CD4-positive, alpha-beta T cell (primary cell): ENCODE measurements at regions of chr1 and their contacts with region 1.

Region 1: DNA sequence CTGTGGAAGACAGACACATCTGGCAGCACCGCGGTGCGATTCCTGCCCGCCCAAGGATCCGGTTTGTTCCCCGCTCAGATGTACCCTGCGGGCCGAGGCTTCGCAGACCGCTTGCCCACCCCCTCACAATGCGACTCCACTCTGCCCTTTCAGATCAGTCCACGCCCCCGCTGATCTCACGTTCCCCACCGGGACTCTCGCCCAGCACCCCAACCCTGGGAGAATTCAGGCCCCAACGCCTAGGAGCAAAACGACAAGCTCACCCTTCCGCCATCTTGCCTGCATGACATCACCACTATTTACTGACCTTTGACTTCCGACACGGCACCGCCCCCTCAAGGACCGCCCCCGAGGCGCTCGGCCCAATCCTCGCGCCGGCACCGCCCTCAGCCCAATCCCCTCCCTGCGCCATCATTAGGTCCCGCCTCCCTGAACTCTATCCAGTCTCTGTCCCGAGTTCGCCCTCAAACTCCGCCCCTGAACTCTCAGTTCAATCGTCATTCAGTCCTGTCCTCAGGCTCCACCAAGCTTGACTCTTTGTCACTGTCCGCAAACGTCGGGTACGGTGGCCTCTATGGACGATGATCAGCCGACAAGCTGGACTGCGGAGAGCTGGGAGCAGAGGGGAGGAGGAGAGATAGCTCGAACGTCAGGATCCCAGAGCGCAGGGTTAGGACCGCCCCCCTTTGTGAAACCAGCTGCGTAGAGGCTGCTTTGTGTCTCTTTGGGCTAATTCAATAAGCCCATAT is at the start of gene BSDC1:
- DNase-seq: peak; percentile 95 to 99 (median 98)
- ATAC-seq: peak; percentile 97
- H3K4me3 ChIP-seq: peak within 1 kb of the TSS; percentile 85
- H3K4me3 Mint-ChIP-seq: peak within 1 kb of the TSS; percentile 98
- H3K27ac ChIP-seq: peak within 1 kb of the TSS; percentile 92 to 96
- H3K27ac Mint-ChIP-seq: no peak within 1 kb of the TSS
- H3K4me1 ChIP-seq: peaks cover 40% of the 10 kb centered on the region
- H3K4me1 Mint-ChIP-seq: peaks cover 24% of the 10 kb centered on the region
- H3K27me3 ChIP-seq: no peaks in the 10 kb centered on the region
- H3K27me3 Mint-ChIP-seq: no peaks in the 10 kb centered on the region
- CTCF ChIP-seq: no peak
- total RNA-seq, gene BSDC1: 186 to 190 TPM

Region 2: GRCh38 chr1:32072622-32073298 is 321.6 kb before region 1 on chr1 and contains the start of gene TMEM39B:
- CTCF ChIA-PET with region 1: no interaction called
- POLR2A ChIA-PET with region 1: interaction called, 20 read pairs
- intact Hi-C with region 1: loop called in 1 of 2 experiments (anchors 2 kb)
- DNase-seq: peak; percentile 86 to 98 (median 92)
- ATAC-seq: peak; percentile 84
- H3K4me3 ChIP-seq: peak within 1 kb of the TSS; percentile 71
- H3K4me3 Mint-ChIP-seq: peak within 1 kb of the TSS; percentile 89
- H3K27ac ChIP-seq: peak within 1 kb of the TSS; percentile 50 to 68
- H3K27ac Mint-ChIP-seq: peak within 1 kb of the TSS; percentile 82
- H3K4me1 ChIP-seq: peaks cover 27% of the 10 kb centered on the region
- H3K4me1 Mint-ChIP-seq: peaks cover 39% of the 10 kb centered on the region
- H3K27me3 ChIP-seq: no peaks in the 10 kb centered on the region
- H3K27me3 Mint-ChIP-seq: no peaks in the 10 kb centered on the region
- CTCF ChIP-seq: no peak
- total RNA-seq, gene TMEM39B: 7.2 to 7.9 TPM

Region 3: DNA sequence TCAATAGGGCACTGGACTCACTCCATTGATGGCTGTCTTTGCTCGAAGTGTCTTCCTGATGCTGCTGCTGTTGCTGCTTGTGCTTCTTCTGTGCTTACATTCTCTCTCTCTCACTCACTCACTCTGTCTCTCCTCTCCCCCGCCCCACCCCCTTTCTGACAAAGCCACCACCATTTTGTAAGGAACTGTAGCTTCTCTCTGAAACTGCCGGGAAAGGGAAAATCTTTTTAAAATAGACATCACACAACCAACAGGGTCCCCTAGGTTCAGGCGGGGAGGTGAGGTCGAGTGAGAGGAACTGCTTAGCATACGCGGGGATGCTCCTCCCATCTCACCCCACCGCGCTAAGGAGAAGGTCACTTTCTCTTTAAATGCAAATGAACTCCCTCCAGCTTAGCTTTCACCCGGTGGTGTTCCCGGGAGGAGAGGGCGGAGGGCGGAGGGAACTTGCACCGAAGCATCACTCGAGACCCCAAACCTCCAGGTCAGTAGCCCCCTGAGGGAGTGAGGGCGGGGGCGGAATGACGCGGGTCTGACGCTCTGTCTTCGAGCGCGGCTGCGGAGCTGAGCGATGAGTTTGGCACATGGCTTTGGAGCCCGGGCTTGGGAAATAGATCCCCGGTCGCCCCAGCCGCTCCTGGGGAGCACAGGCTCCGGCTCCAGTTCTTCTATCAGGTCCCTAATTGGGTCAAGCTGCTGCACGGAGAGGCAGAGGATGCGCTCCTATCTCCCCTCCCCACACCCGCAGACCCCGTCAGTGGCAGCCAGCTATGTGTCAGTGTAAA is 193.9 kb before region 1 on chr1 and contains the start of gene CCDC28B:
- CTCF ChIA-PET with region 1: interaction called, 3 read pairs
- POLR2A ChIA-PET with region 1: interaction called, 22 read pairs
- intact Hi-C with region 1: no loop called
- DNase-seq: peak in 13 of 14 experiments; percentile 15 to 74 (median 46)
- ATAC-seq: peak; percentile 54
- H3K4me3 ChIP-seq: peak within 1 kb of the TSS; percentile 87
- H3K4me3 Mint-ChIP-seq: peak within 1 kb of the TSS; percentile 82
- H3K27ac ChIP-seq: peak within 1 kb of the TSS; percentile 81 to 97
- H3K27ac Mint-ChIP-seq: peak within 1 kb of the TSS; percentile 95
- H3K4me1 ChIP-seq: peaks cover 75% of the 10 kb centered on the region
- H3K4me1 Mint-ChIP-seq: peaks cover 64% of the 10 kb centered on the region
- H3K27me3 ChIP-seq: no peaks in the 10 kb centered on the region
- H3K27me3 Mint-ChIP-seq: no peaks in the 10 kb centered on the region
- CTCF ChIP-seq: no peak
- total RNA-seq, gene CCDC28B: 4.0 to 5.7 TPM

Region 4: GRCh38 chr1:32240140-32240951 is 154.0 kb before region 1 on chr1:
- CTCF ChIA-PET with region 1: no interaction called
- POLR2A ChIA-PET with region 1: interaction called, 10 read pairs
- intact Hi-C with region 1: no loop called
- DNase-seq: peak in 13 of 14 experiments; percentile 38 to 86 (median 63)
- ATAC-seq: peak; percentile 75
- H3K4me3 ChIP-seq: peak overlapping the region; percentile 90
- H3K4me3 Mint-ChIP-seq: peak overlapping the region; percentile 94
- H3K27ac ChIP-seq: peak overlapping the region; percentile 15 to 50
- H3K27ac Mint-ChIP-seq: peak overlapping the region; percentile 64
- H3K4me1 ChIP-seq: peaks cover 33% of the 10 kb centered on the region
- H3K4me1 Mint-ChIP-seq: peaks cover 25% of the 10 kb centered on the region
- H3K27me3 ChIP-seq: no peaks in the 10 kb centered on the region
- H3K27me3 Mint-ChIP-seq: no peaks in the 10 kb centered on the region
- CTCF ChIP-seq: peak; percentile 52

Region 5: GRCh38 chr1:32321712-32322291 is 72.5 kb before region 1 on chr1:
- CTCF ChIA-PET with region 1: no interaction called
- POLR2A ChIA-PET with region 1: interaction called, 23 read pairs
- intact Hi-C with region 1: no loop called
- DNase-seq: peak in 10 of 14 experiments; percentile 7 to 70 (median 29)
- ATAC-seq: peak; percentile 87
- H3K4me3 ChIP-seq: peak overlapping the region; percentile 25
- H3K4me3 Mint-ChIP-seq: peak overlapping the region; percentile 62
- H3K27ac ChIP-seq: peak overlapping the region; percentile 12 to 49
- H3K27ac Mint-ChIP-seq: peak overlapping the region; percentile 82
- H3K4me1 ChIP-seq: peaks cover 62% of the 10 kb centered on the region
- H3K4me1 Mint-ChIP-seq: peaks cover 51% of the 10 kb centered on the region
- H3K27me3 ChIP-seq: no peaks in the 10 kb centered on the region
- H3K27me3 Mint-ChIP-seq: no peaks in the 10 kb centered on the region
- CTCF ChIP-seq: no peak

Region 6: DNA sequence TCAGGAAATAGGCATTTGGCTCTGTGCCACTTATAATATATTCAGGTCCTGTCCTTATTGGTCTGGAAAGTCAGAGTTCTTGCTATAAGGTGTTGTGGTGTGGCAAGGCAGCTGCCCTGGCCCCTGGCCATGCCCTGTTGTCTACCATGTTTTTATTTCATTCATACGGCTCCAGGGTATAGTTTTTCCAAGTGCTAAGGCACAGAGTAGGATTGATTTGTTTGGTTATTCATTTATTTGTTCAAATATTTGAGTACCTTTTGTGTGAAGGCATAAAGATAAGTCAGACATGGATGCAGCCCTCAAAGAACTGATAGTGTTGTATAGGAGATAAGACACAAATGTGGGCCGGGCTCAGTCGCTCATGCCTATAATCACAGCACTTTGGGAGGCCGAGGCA is 80.6 kb after region 1 on chr1:
- CTCF ChIA-PET with region 1: no interaction called
- POLR2A ChIA-PET with region 1: no interaction called
- intact Hi-C with region 1: no loop called
- DNase-seq: no peak
- ATAC-seq: no peak
- H3K4me3 ChIP-seq: no peak overlapping the region
- H3K4me3 Mint-ChIP-seq: no peak overlapping the region
- H3K27ac ChIP-seq: no peak overlapping the region
- H3K27ac Mint-ChIP-seq: no peak overlapping the region
- H3K4me1 ChIP-seq: no peaks in the 10 kb centered on the region
- H3K4me1 Mint-ChIP-seq: no peaks in the 10 kb centered on the region
- H3K27me3 ChIP-seq: peaks cover 0 to 13% of the 10 kb centered on the region in 2 experiments
- H3K27me3 Mint-ChIP-seq: peaks cover 34% of the 10 kb centered on the region
- CTCF ChIP-seq: no peak

Region 7: DNA sequence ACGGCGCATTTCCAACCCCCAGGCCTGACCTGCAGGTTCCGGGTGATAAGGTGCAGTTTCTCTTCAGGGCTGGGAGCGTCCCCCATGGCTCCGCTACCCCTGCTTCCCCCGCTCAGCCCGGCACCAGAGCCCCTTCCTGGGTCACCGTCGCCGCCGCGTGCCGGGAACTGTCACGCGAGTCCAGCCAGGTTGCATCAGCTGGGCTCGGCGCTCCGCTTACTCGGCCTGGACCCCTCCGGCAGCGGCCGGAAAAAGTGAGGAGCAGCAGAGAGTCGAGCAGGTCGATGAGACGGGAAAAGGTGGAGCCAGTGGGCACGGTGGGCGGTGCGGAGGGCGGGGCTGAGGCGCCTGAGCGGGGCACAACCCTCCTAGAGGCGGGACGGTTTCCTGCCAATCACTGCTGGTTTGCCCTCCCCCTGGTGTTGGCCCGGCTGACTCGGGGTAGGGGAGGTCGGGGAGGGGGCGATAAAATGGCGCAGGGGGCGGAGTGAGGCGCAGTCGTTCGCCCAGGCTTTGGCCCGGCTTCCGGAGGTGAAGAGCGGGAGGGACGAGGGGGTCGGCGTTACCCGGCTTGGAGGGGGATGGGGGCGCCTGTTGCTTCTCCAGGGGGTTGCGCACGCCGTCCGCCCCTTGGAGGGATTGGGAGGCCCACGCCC is 423.0 kb after region 1 on chr1 and contains the starts of genes S100PBP and YARS1:
- CTCF ChIA-PET with region 1: no interaction called
- POLR2A ChIA-PET with region 1: interaction called, 6 read pairs
- intact Hi-C with region 1: loop called in 1 of 2 experiments (anchors 5 kb)
- DNase-seq: peak; percentile 98 to 100 (median 100)
- ATAC-seq: peak; percentile 94
- H3K4me3 ChIP-seq: peak within 1 kb of the TSS; percentile 99
- H3K4me3 Mint-ChIP-seq: peak within 1 kb of the TSS; percentile 100
- H3K27ac ChIP-seq: peak within 1 kb of the TSS; percentile 85 to 87
- H3K27ac Mint-ChIP-seq: peak within 1 kb of the TSS; percentile 96
- H3K4me1 ChIP-seq: peaks cover 60% of the 10 kb centered on the region
- H3K4me1 Mint-ChIP-seq: peaks cover 63% of the 10 kb centered on the region
- H3K27me3 ChIP-seq: no peaks in the 10 kb centered on the region
- H3K27me3 Mint-ChIP-seq: no peaks in the 10 kb centered on the region
- CTCF ChIP-seq: no peak
- total RNA-seq, gene S100PBP: 18.8 to 21.6 TPM
- total RNA-seq, gene YARS1: 67.6 to 73.2 TPM

Region 8: DNA sequence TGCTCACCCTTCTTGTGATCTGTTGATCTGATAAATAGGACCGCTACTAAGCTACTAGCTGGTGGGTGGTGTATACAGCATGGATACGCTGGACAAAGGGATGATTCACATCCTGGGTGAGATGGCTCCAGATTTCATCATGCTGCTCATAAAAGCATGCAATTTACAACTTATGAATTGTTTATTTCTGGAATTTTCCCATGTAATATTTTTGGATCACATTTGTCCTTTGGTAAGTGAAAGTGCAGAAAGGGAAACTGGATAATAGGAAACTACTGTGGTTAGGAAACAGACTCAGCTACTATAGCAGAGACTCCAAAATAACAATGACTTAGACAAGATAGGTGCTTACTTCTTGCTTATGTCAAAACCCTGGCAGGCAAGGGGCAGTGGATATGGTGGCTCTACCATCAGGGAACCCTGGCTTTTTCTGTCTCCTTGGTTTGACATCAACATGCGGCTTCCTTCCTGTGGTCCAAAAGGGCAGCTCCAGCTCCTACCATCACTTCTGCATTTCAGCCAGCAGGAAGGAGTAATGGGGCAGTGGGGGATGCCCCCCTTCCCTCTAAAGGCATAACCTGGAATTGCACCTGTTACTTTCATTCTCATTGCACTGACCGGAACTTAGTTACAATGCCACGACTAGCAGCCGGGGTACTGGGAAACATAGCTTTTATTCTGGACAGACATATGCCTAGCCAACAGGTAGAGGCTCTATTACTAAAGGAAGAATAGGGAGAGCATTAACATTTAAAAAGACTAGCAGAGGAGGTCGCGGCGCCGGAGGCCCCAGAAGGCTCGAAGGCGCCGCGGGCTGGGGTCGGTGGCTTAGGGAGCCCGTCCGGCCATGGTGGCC is 656.1 kb after region 1 on chr1:
- CTCF ChIA-PET with region 1: no interaction called
- POLR2A ChIA-PET with region 1: no interaction called
- intact Hi-C with region 1: no loop called
- DNase-seq: peak in 2 of 14 experiments; percentile 37 to 59
- ATAC-seq: no peak
- H3K4me3 ChIP-seq: no peak overlapping the region
- H3K4me3 Mint-ChIP-seq: no peak overlapping the region
- H3K27ac ChIP-seq: no peak overlapping the region
- H3K27ac Mint-ChIP-seq: no peak overlapping the region
- H3K4me1 ChIP-seq: peaks cover 8% of the 10 kb centered on the region
- H3K4me1 Mint-ChIP-seq: no peaks in the 10 kb centered on the region
- H3K27me3 ChIP-seq: no peaks in the 10 kb centered on the region
- H3K27me3 Mint-ChIP-seq: peaks cover 14% of the 10 kb centered on the region
- CTCF ChIP-seq: no peak